GM12878 (cell line): ENCODE measurements at regions of chr14 and their contacts with region 1.

Region 1: GRCh38 chr14:23588884-23589598 is 10.5 kb upstream of the JPH4 start:
- DNase-seq: peak; percentile 56
- ATAC-seq: peak; percentile 100
- H3K4me3 ChIP-seq: no peak overlapping the region
- H3K27ac ChIP-seq: no peak overlapping the region
- H3K4me1 ChIP-seq: peaks cover 8% of the 10 kb centered on the region
- H3K27me3 ChIP-seq: no peaks in the 10 kb centered on the region
- CTCF ChIP-seq: peak; percentile 94 to 99 (median 95); a peak in 5 of 6 replicates
- EP300 ChIP-seq: 0 out of 4 replicates have a peak, but pooled peaks of 1 of the 2 experiments have one; percentile 15
- POLR2A ChIP-seq: no peak
- RAD21 ChIP-seq: peak; percentile 99

Region 2: GRCh38 chr14:23544511-23545447 is 44.3 kb before region 1 on chr14:
- CTCF ChIA-PET with region 1: no interaction called
- POLR2A ChIA-PET with region 1: no interaction called
- RAD21 ChIA-PET with region 1: no interaction called
- SMC1A ChIA-PET with region 1: no interaction called
- in situ Hi-C with region 1: no loop called
- intact Hi-C with region 1: no loop called
- DNase-seq: no peak
- ATAC-seq: no peak
- H3K4me3 ChIP-seq: no peak overlapping the region
- H3K27ac ChIP-seq: no peak overlapping the region
- H3K4me1 ChIP-seq: no peaks in the 10 kb centered on the region
- H3K27me3 ChIP-seq: no peaks in the 10 kb centered on the region
- CTCF ChIP-seq: no peak
- EP300 ChIP-seq: no peak
- POLR2A ChIP-seq: no peak
- RAD21 ChIP-seq: no peak

Region 3: DNA sequence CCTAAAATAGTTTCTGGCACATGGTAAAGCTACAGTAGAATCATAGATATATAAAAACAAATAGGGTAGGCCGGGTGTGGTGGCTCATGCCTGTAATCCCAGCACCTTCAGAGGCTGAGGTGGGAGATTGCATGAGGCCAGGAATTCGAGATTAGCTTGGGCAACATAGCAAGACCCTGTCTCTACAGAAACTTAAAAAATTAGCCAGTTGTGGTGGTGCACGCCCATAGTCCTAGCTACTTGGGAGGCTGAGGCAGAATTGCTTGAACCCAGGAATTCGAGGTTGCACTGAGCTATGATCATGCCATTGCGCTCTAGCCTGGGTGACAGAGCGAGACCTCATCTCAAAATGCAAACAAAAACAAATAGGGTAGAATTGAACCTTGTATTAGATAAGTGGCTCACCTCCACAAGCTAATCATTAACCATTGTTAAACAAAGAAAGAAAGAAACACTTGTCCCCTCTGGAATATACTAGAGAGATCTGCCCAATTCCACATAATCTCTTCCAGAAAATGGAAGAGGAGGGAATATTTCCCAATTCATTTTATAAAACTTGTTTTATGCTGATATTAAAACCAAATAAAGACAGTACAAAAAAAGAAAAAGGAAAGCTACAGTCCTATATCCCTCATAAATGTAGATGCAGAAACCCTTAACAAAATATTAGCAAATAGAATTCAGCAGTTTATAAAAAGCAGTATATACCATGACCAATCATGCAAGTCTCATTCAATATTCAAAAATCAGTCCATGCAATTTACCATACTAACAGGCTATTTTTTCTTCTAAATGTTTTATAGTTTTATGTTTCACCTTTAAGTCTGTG is 24.4 kb after region 1 on chr14:
- CTCF ChIA-PET with region 1: interaction called, 33 read pairs
- POLR2A ChIA-PET with region 1: no interaction called
- RAD21 ChIA-PET with region 1: interaction called, 5 read pairs
- SMC1A ChIA-PET with region 1: interaction called, 7 read pairs
- in situ Hi-C with region 1: no loop called
- intact Hi-C with region 1: no loop called
- DNase-seq: no peak
- ATAC-seq: no peak; the same call in 2 of the 3 replicates
- H3K4me3 ChIP-seq: no peak overlapping the region
- H3K27ac ChIP-seq: no peak overlapping the region
- H3K4me1 ChIP-seq: no peaks in the 10 kb centered on the region
- H3K27me3 ChIP-seq: no peaks in the 10 kb centered on the region
- CTCF ChIP-seq: no peak
- EP300 ChIP-seq: no peak
- POLR2A ChIP-seq: no peak
- RAD21 ChIP-seq: no peak

Region 4: DNA sequence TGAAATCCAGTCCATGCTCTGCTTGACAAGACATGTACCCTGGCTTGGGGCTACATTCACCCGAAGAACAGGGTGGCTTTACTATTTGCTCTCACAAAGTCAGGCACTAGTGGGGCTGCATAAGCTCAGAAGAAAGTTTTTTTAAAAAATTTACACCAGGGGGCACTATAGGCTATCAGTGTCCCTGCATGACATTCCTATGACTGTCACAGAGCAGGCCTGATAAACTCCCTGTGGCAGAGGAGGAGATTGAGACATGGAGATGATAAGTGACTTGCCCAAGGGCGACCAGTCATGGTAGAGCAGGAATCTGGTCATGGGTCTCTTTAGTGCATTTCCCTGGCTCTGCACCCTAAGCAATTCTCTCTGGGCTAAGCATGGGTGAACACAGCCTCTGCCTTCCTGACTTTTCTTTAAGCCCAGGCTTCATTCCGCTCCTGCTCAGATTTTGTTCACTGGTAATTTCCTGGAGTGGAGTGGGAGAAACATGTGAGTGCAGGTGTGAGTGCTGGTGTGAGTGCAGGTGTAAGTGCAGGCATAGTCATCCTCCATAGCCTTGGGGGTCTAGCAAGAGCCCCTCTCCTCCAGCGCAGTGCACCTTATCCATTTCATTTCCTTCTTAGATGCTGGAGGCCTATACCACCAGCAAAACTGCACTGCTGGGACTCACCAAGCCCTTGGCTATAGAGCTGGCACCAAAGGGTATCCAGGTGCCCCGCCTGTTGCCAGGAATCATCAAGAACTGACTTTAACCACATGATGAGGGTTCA is 138.7 kb after region 1 on chr14:
- CTCF ChIA-PET with region 1: interaction called, 3 read pairs
- POLR2A ChIA-PET with region 1: no interaction called
- RAD21 ChIA-PET with region 1: no interaction called
- SMC1A ChIA-PET with region 1: interaction called, 3 read pairs
- in situ Hi-C with region 1: no loop called
- intact Hi-C with region 1: loop called (anchors 5 kb)
- DNase-seq: no peak
- ATAC-seq: peak; percentile 88
- H3K4me3 ChIP-seq: no peak overlapping the region
- H3K27ac ChIP-seq: no peak overlapping the region
- H3K4me1 ChIP-seq: no peaks in the 10 kb centered on the region
- H3K27me3 ChIP-seq: no peaks in the 10 kb centered on the region
- CTCF ChIP-seq: peak; percentile 22 to 24 (median 22); a peak in 3 of 6 replicates
- EP300 ChIP-seq: no peak
- POLR2A ChIP-seq: no peak
- RAD21 ChIP-seq: peak; percentile 65

Region 5: GRCh38 chr14:23929822-23930294 is 340.8 kb after region 1 on chr14:
- CTCF ChIA-PET with region 1: interaction called, 37 read pairs
- POLR2A ChIA-PET with region 1: no interaction called
- RAD21 ChIA-PET with region 1: interaction called, 16 read pairs
- SMC1A ChIA-PET with region 1: interaction called, 25 read pairs
- in situ Hi-C with region 1: loop called (anchors 5 kb)
- intact Hi-C with region 1: loop called (anchors 1 kb)
- DNase-seq: peak; percentile 25
- ATAC-seq: peak; percentile 99
- H3K4me3 ChIP-seq: no peak overlapping the region
- H3K27ac ChIP-seq: no peak overlapping the region
- H3K4me1 ChIP-seq: no peaks in the 10 kb centered on the region
- H3K27me3 ChIP-seq: no peaks in the 10 kb centered on the region; a peak in 1 of 4 replicates
- CTCF ChIP-seq: peak; percentile 84 to 97 (median 96)
- EP300 ChIP-seq: no peak
- POLR2A ChIP-seq: no peak
- RAD21 ChIP-seq: peak; percentile 80